Naive thymus-derived CD4-positive, alpha-beta T cell (primary cell): ENCODE measurements at regions of chr6 and their contacts with region 1.

Region 1: DNA sequence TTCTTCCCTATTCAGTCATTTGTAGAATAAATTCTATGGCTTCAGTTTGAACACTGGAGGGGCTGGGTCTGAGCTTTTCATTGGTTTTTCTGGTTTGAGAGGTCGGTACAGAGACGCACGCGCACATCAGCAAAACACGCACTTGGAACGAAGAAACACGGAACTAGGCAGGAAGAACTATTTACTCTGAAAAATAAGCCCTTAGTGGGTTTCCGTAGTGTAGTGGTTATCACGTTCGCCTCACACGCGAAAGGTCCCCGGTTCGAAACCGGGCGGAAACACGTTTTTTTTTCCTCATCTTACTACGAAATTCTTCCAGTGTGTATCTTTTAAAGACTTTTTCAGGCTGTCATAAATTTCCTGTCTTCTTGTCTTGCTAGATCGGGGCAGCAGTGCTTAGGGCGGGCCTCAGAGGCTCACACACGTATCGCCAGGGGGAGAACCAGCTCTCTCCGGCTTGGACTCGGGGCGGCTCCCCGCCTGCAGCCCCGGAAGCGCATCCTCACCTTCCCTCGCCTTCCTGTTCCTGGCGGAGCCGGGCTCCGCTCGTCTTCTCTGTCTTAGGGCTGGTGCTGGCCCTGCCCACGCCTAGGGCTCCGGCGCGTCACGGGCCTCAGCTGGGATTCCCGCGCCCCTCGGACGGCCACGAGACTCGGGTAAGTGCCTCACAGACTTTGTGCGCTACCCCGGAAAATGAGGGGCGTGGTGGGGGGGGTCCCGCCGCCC is at the start of gene HMGN4:
- DNase-seq: peak; percentile 64 to 97 (median 95)
- ATAC-seq: peak; percentile 79
- H3K4me3 ChIP-seq: peak within 1 kb of the TSS; percentile 76
- H3K4me3 Mint-ChIP-seq: peak within 1 kb of the TSS; percentile 88 to 99 (median 94)
- H3K27ac ChIP-seq: peak within 1 kb of the TSS; percentile 88
- H3K27ac Mint-ChIP-seq: peak within 1 kb of the TSS; percentile 91 to 99 (median 98)
- H3K4me1 ChIP-seq: peaks cover 20 to 23% of the 10 kb centered on the region in 2 donors
- H3K4me1 Mint-ChIP-seq: peaks cover 46 to 72% (median 60%) of the 10 kb centered on the region in 7 donors
- H3K27me3 ChIP-seq: no peaks in the 10 kb centered on the region
- H3K27me3 Mint-ChIP-seq: peaks cover 0 to 5% (median 0%) of the 10 kb centered on the region in 5 donors
- total RNA-seq, gene HMGN4: 37.6 to 96.0 (median 81.7) TPM

Region 2: DNA sequence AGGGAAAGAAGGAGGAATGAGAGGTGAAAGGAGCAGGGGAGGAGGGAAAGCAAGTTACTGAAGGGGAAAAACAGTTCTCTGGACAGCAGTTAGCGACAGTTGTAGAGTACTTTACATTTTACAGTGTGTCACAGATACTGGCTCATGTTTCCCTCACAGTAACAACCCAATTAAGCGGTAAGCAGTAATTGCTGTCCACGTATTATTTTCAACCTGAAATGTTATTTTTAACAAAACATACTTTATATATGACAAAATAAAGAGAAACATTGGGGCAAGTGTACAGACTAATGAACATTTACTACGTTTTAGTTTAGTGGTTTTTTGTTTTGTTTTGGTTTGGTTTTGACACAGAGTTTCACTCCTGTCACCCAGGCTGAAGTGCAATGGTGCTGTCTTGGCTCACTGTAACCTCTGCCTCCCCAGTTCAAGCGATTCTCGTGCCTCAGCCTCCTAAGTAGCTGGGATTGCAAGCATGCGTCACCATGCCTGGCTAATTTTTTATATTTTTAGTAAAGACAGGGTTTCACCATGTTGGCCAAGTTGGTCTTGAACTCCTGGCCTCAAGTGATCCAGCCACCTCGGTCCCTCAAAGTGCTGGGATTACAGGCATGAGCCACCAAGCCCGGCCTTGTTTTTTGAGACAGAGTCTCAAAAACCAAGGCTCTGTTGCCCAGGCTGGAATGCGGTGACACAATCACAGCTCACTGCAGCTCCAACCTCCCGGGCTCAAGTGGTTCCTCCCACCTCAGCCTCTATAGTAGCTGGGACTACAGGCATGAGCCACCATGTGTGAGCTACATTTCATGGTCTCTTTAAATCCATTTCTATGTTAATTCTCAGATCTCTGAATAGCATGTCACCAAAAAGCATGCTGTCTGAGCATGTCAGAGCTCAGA is 195.7 kb before region 1 on chr6:
- CTCF ChIA-PET with region 1: interaction called, 3 read pairs
- POLR2A ChIA-PET with region 1: interaction called, 6 read pairs
- intact Hi-C with region 1: loop called in 1 of 2 experiments (anchors 1 kb)
- DNase-seq: no peak
- ATAC-seq: peak; percentile 4
- H3K4me3 ChIP-seq: peak overlapping the region; percentile 38
- H3K4me3 Mint-ChIP-seq: peak overlapping the region; percentile 55 to 91 (median 70)
- H3K27ac ChIP-seq: no peak overlapping the region
- H3K27ac Mint-ChIP-seq: peak overlapping the region in 2 of 9 donors; percentile 8 to 70
- H3K4me1 ChIP-seq: peaks cover 0 to 3% of the 10 kb centered on the region in 2 donors
- H3K4me1 Mint-ChIP-seq: peaks cover 0 to 22% (median 8%) of the 10 kb centered on the region in 7 donors
- H3K27me3 ChIP-seq: no peaks in the 10 kb centered on the region
- H3K27me3 Mint-ChIP-seq: peaks cover 0 to 18% (median 0%) of the 10 kb centered on the region in 5 donors

Region 3: GRCh38 chr6:26401987-26402658 is 135.9 kb before region 1 on chr6 and contains the start of gene BTN3A1:
- CTCF ChIA-PET with region 1: no interaction called
- POLR2A ChIA-PET with region 1: interaction called, 3 read pairs
- intact Hi-C with region 1: loop called in 1 of 2 experiments (anchors 1 kb)
- DNase-seq: peak in 8 of 9 donors; percentile 65 to 85 (median 78)
- ATAC-seq: peak; percentile 93
- H3K4me3 ChIP-seq: peak within 1 kb of the TSS; percentile 95
- H3K4me3 Mint-ChIP-seq: peak within 1 kb of the TSS; percentile 94 to 100 (median 100)
- H3K27ac ChIP-seq: peak within 1 kb of the TSS; percentile 96
- H3K27ac Mint-ChIP-seq: peak within 1 kb of the TSS; percentile 97 to 100 (median 99)
- H3K4me1 ChIP-seq: peaks cover 35 to 37% of the 10 kb centered on the region in 2 donors
- H3K4me1 Mint-ChIP-seq: peaks cover 37 to 58% (median 53%) of the 10 kb centered on the region in 7 donors
- H3K27me3 ChIP-seq: no peaks in the 10 kb centered on the region
- H3K27me3 Mint-ChIP-seq: no peaks in the 10 kb centered on the region
- total RNA-seq, gene BTN3A1: 122 to 242 (median 235) TPM

Region 4: GRCh38 chr6:26520853-26521599 is 17.0 kb before region 1 on chr6:
- CTCF ChIA-PET with region 1: interaction called, 3 read pairs
- POLR2A ChIA-PET with region 1: interaction called, 51 read pairs
- intact Hi-C with region 1: loop called (anchors 1 kb)
- DNase-seq: peak; percentile 74 to 90 (median 87)
- ATAC-seq: peak; percentile 84
- H3K4me3 ChIP-seq: peak overlapping the region; percentile 61
- H3K4me3 Mint-ChIP-seq: peak overlapping the region; percentile 73 to 100 (median 91)
- H3K27ac ChIP-seq: peak overlapping the region; percentile 69
- H3K27ac Mint-ChIP-seq: peak overlapping the region; percentile 91 to 98 (median 97)
- H3K4me1 ChIP-seq: peaks cover 8 to 15% of the 10 kb centered on the region in 2 donors
- H3K4me1 Mint-ChIP-seq: peaks cover 6 to 42% (median 35%) of the 10 kb centered on the region in 7 donors
- H3K27me3 ChIP-seq: no peaks in the 10 kb centered on the region
- H3K27me3 Mint-ChIP-seq: peaks cover 0 to 6% (median 0%) of the 10 kb centered on the region in 5 donors

Region 5: GRCh38 chr6:26596579-26597388 is 58.8 kb after region 1 on chr6 and contains the start of gene ABT1:
- CTCF ChIA-PET with region 1: no interaction called
- POLR2A ChIA-PET with region 1: interaction called, 8 read pairs
- intact Hi-C with region 1: loop called (anchors 1 kb)
- DNase-seq: peak; percentile 87 to 96 (median 95)
- ATAC-seq: peak; percentile 95
- H3K4me3 ChIP-seq: peak within 1 kb of the TSS; percentile 81
- H3K4me3 Mint-ChIP-seq: no peak within 1 kb of the TSS
- H3K27ac ChIP-seq: peak within 1 kb of the TSS; percentile 89
- H3K27ac Mint-ChIP-seq: peak within 1 kb of the TSS in 1 of 9 donors; percentile 92
- H3K4me1 ChIP-seq: peaks cover 17 to 22% of the 10 kb centered on the region in 2 donors
- H3K4me1 Mint-ChIP-seq: peaks cover 5 to 20% (median 10%) of the 10 kb centered on the region in 7 donors
- H3K27me3 ChIP-seq: peaks cover 8 to 14% of the 10 kb centered on the region in 2 donors
- H3K27me3 Mint-ChIP-seq: peaks cover 3 to 28% (median 16%) of the 10 kb centered on the region in 5 donors
- total RNA-seq, gene ABT1: 23.3 to 37.5 (median 35.0) TPM